ENCODE measurements at regions of chr2 and their contacts with region 1.

Region 1: GRCh38 chr2:96174251-96175144 is 29.3 kb upstream of the DUSP2 start:
- DNase-seq: peak; percentile 64 to 87
- ATAC-seq: peak; percentile 82 to 90 (median 86)
- H3K4me3 ChIP-seq: no peak overlapping the region
- H3K27ac ChIP-seq: peak overlapping the region; percentile 26
- H3K4me1 ChIP-seq: peaks cover 22% of the 10 kb centered on the region
- H3K27me3 ChIP-seq: no peaks in the 10 kb centered on the region
- CTCF ChIP-seq: peak; percentile 93

Region 2: GRCh38 chr2:96024336-96025193 is 149.9 kb before region 1 on chr2:
- intact Hi-C with region 1: loop called in 1 of 2 experiments (anchors 10 kb)
- DNase-seq: no peak
- ATAC-seq: no peak
- H3K4me3 ChIP-seq: no peak overlapping the region
- H3K27ac ChIP-seq: no peak overlapping the region
- H3K4me1 ChIP-seq: no peaks in the 10 kb centered on the region
- H3K27me3 ChIP-seq: no peaks in the 10 kb centered on the region
- CTCF ChIP-seq: no peak

Region 3: DNA sequence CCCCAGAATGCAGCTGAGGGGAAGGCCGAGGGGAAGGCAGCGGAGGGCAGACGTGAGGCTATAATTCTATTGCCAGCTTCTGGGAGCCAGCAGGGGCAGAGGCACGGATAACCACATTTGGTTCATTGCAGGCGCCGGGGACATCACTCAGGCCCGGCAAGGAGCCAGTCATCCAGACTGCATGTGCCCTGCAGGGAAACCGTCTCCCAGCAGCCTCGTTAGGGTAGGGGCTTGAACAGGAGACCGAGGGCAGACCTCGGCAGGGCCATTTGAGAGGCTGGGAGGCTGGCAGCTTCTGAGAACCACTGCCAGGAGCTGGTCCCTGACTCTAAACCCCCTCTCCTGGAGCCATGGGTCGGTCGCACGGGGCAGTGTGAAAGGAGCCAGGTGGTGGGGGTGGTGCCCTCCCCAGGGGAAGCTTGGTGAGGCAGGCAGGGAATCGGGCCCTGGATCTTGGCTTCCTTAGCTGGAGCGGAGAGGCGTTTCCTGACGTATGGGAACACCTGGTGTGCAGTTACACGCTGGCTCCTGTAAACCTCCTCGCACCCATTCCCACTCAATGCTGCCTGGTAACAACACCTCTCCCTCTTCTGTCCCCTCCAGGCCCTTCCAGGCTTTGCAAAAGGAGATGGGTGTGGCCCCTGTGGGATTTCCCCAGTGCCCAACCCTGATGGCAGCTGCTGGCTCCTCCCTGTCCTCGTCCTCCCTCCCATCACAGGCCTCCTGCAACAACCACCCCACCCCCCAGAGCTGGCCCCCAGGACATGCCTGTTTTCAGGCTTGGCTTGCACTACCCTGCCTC is 82.8 kb before region 1 on chr2:
- intact Hi-C with region 1: no loop called
- DNase-seq: peak in 1 of 2 donors; percentile 23
- ATAC-seq: no peak
- H3K4me3 ChIP-seq: no peak overlapping the region
- H3K27ac ChIP-seq: no peak overlapping the region
- H3K4me1 ChIP-seq: no peaks in the 10 kb centered on the region
- H3K27me3 ChIP-seq: no peaks in the 10 kb centered on the region
- CTCF ChIP-seq: no peak

Region 4: GRCh38 chr2:96138179-96139145 is 36.0 kb before region 1 on chr2 and contains the start of gene ASTL:
- intact Hi-C with region 1: loop called (anchors 5 kb)
- DNase-seq: peak in 1 of 2 donors; percentile 60
- ATAC-seq: peak in 3 of 4 donors; percentile 65 to 88 (median 81)
- H3K4me3 ChIP-seq: no peak within 1 kb of the TSS
- H3K27ac ChIP-seq: no peak within 1 kb of the TSS
- H3K4me1 ChIP-seq: no peaks in the 10 kb centered on the region
- H3K27me3 ChIP-seq: no peaks in the 10 kb centered on the region
- CTCF ChIP-seq: peak; percentile 51
- total RNA-seq, gene ASTL: not detected

Region 5: GRCh38 chr2:96554293-96555145 is 380.0 kb after region 1 on chr2:
- intact Hi-C with region 1: no loop called
- DNase-seq: peak; percentile 74 to 91
- ATAC-seq: peak; percentile 56 to 82 (median 74)
- H3K4me3 ChIP-seq: peak overlapping the region; percentile 55
- H3K27ac ChIP-seq: peak overlapping the region; percentile 91
- H3K4me1 ChIP-seq: peaks cover 17% of the 10 kb centered on the region
- H3K27me3 ChIP-seq: no peaks in the 10 kb centered on the region
- CTCF ChIP-seq: peak; percentile 97

Measured in psoas muscle (tissue), 8 donors.